K562 (cell line): ENCODE measurements at regions of chr10 and their contacts with region 1.

Region 1: DNA sequence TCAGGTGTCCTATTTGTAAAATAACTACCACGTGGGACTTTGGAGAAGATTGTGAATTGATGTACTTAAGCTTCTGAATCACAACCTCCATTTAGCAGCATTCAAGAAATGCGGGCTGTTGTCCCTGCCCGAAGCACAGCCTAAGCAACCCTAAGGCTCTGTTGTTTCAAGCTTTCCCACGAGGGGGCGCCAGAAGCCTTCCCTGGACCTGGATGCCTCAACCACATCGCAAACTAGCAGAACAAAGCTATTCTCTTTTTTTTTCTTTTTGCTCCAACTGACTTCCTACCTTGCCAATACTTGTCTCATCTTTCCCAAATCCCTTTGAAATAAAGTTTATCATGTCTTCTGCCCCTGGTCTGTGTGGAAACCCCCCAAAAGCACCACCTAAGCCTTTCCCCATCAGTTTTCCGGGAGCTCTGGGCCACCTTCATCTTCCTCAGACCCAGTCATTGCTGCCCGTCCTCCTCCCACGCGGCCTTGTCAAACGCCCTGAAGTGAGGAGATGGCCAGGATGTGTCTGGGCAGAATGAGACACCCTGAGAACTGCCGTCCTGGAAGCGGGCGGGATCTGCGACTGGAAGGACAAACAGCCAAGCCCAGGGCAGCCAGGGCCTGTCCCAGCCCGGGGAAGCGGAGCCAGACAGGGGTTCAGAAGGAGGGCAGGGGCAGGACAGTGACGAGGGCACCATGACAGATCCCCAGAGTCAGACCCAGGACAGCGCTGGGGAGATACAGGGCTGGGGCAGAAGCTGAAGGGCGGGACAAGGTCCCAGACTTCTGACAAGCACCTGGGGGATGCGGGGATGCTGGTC is 112.7 kb downstream of the SLIT1 start:
- DNase-seq: peak; percentile 60 to 75 (median 72)
- ATAC-seq: peak; percentile 86
- H3K4me3 ChIP-seq: no peak overlapping the region
- H3K27ac ChIP-seq: no peak overlapping the region
- H3K4me1 ChIP-seq: peaks cover 0 to 5% of the 10 kb centered on the region in 2 experiments; a peak in 2 of 5 replicates
- H3K27me3 ChIP-seq: peaks cover 0 to 26% of the 10 kb centered on the region in 2 experiments; a peak in 3 of 5 replicates
- CTCF ChIP-seq: peak; percentile 79 to 87 (median 81)
- EP300 ChIP-seq: no peak
- POLR2A ChIP-seq: no peak
- RAD21 ChIP-seq: peak; percentile 63 to 82

Region 2: GRCh38 chr10:97196223-97197029 is 123.4 kb after region 1 on chr10:
- CTCF ChIA-PET with region 1: no interaction called
- POLR2A ChIA-PET with region 1: interaction called, 3 read pairs
- in situ Hi-C with region 1: no loop called
- intact Hi-C with region 1: loop called (anchors 5 kb)
- DNase-seq: peak; percentile 69 to 77 (median 73)
- ATAC-seq: peak; percentile 95
- H3K4me3 ChIP-seq: peak overlapping the region; percentile 36
- H3K27ac ChIP-seq: no peak overlapping the region
- H3K4me1 ChIP-seq: peaks cover 0 to 10% of the 10 kb centered on the region in 2 experiments; a peak in 2 of 5 replicates
- H3K27me3 ChIP-seq: peaks cover 10 to 26% of the 10 kb centered on the region in 2 experiments
- CTCF ChIP-seq: peak; percentile 73 to 82 (median 74)
- EP300 ChIP-seq: no peak
- POLR2A ChIP-seq: no peak
- RAD21 ChIP-seq: no peak

Region 3: DNA sequence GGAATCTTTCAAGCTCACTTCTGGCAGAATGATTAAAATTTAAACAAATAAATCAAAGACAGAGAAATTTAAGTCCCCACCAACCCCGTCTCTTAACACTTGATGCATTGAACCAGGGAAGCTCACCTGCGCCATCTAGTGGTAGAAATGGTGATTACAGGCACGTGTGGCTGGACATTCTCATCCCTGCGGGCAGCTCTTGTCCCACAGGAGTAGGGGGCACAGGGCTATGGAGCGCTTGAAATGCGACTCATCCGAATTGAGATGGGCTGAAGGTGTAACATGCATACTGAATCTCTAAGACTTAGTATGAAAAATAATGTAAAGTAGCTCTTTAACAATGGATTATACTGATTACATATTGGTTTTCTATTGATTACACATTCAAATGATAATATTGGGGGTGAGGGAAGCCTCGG is 137.5 kb after region 1 on chr10:
- CTCF ChIA-PET with region 1: interaction called, 4 read pairs
- POLR2A ChIA-PET with region 1: interaction called, 3 read pairs
- in situ Hi-C with region 1: no loop called
- intact Hi-C with region 1: loop called (anchors 1 kb)
- DNase-seq: peak; percentile 60 to 77 (median 70)
- ATAC-seq: peak; percentile 88
- H3K4me3 ChIP-seq: no peak overlapping the region
- H3K27ac ChIP-seq: no peak overlapping the region
- H3K4me1 ChIP-seq: peaks cover 0 to 5% of the 10 kb centered on the region in 2 experiments; a peak in 2 of 5 replicates
- H3K27me3 ChIP-seq: peaks cover 0 to 22% of the 10 kb centered on the region in 2 experiments; a peak in 2 of 5 replicates
- CTCF ChIP-seq: peak; percentile 81 to 90 (median 83)
- EP300 ChIP-seq: no peak
- POLR2A ChIP-seq: no peak
- RAD21 ChIP-seq: peak; percentile 39 to 68

Region 4: GRCh38 chr10:97355571-97355975 is 282.5 kb after region 1 on chr10:
- CTCF ChIA-PET with region 1: no interaction called
- POLR2A ChIA-PET with region 1: no interaction called
- in situ Hi-C with region 1: loop called (anchors 10 kb)
- intact Hi-C with region 1: loop called (anchors 5 kb)
- DNase-seq: no peak
- ATAC-seq: peak; percentile 68
- H3K4me3 ChIP-seq: no peak overlapping the region
- H3K27ac ChIP-seq: no peak overlapping the region; the same call in 2 of the 3 replicates
- H3K4me1 ChIP-seq: no peaks in the 10 kb centered on the region; a peak in 1 of 5 replicates
- H3K27me3 ChIP-seq: no peaks in the 10 kb centered on the region
- CTCF ChIP-seq: peak; percentile 44 to 55 (median 54)
- EP300 ChIP-seq: no peak
- POLR2A ChIP-seq: no peak
- RAD21 ChIP-seq: peak in 1 of 2 experiments; percentile 58; a peak in 3 of 4 replicates